ENCODE measurements at regions of chr17 and their contacts with region 1.

Region 1: DNA sequence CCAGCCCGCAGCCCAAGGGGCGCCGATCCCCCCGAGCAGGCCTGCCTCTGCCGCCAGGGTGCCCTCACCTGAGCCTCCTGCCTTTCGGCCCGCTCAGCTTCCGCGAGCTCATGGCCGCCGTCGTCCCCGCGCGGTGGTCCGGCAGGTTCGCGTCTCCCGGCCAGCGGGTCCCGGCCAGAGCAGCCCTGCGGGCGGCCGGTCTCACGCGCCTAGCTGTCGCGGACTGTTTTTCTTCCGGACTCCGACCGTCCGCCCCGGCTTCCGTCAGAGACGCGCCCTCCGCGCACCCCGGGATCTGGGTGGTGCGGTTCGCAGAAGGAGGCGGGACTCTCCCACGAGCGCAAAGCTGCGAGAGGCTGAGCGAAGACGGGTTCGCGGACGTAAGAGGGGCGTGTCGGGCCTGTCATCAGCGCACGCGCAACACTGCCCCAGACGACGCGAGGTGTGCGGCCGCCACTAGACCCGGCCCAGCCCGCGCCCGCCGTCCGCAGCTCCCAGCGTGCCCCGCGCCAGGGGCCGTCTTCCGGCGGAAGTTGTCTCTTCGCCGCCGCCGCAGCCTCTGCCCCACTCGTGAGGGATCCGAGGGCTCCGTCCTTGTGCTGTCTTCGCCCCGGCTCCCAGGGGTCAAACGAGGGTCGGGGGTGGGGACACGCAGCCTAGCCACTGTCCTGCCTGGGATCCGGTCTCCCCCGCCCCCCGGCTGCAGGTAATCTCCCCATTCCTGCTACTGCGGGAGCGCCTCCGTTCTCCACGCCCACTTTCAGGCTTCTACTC is at the start of gene INPP5K:
- DNase-seq: peak; percentile 97 to 100 (median 98)

Region 2: DNA sequence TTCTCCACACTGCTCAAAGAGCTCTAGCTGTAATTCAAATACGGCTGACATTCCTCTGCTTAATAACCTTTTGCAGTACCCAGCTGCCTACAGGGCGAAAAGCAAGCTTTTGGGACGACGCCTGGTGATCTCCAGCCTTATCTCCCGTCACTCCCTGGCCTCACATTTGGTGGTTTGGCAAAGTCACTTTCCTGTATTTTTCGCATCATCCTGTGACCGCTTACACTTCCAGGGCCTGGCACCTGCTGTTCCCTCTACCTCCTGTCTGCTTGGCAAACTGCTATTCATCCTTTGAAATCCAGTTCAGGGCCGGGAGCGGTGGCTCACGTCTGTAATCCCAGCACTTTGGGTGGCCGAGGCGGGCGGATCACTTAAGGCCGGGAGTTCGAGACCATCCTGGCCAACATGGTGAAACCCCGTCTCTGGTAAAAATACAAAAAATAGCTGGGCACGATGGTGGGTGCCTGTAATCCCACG is 249.1 kb before region 1 on chr17:
- intact Hi-C with region 1: loop called (anchors 10 kb)
- DNase-seq: no peak

Region 3: DNA sequence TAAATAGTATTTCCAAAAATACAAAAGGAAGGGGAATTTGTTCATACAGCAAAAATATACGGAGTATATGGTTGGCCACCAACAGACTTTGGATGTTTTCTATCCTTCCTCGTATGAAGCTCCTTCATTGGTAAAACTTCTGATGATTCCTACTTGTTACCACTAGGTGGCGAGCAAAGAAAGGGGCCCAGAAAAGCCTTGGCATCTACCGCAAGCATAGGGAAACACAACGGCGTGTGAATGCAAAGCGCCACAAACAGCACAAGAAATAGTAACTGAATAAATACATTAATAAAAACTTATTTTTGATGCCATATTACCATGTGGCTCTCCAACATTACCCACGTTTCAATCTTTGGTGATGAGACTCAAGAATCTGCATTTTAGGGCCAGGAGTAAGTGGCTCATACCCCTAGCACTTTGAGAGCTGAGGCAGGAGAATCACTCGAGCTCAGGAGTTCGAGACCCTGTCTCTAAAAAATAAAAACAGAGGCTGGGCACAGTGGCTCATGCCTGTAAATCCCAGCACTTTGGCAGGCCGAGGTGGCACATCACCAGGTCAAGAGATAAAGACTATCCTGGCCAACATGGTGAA is 151.0 kb before region 1 on chr17:
- intact Hi-C with region 1: loop called (anchors 1 kb)
- DNase-seq: peak in 6 of 10 donors; percentile 40 to 92 (median 49)

Region 4: DNA sequence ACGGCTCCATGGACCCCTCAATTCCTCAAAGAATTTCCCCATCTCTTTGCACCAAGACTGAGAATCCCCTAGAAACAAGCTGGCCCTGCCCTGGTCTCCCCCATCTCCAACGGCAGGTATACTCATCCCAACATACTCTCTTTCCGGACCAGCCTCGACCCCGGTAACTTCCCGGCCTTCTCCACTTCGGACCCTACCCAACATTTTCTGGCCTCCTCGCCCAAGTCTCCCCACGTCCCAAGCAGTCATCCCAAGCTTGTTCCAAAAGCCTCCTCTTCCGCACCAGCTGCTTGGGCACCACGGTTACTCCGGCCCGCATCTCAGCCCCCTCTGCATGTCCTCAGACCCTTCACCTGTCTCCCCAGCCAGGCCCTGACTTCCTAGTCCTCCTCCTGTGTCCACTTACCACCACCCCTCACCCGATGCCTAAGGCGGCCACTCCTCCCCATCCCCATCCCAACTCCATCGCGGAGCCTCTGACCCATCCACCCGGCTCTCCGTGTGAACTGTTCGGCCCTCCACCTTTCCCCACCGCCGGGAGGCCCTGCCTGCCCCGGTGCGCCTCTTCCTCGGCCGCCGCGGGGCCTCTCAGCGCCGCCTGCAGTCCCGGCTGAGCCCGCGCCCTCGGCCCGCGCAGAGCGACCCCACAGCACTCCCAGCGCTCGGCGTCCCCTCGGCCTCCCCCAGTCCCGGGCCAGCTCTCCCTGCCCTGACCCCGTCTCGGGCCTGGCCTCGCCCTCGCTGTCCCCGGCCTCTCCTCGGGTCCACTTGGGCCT is 45.0 kb after region 1 on chr17:
- intact Hi-C with region 1: loop called (anchors 2 kb)
- DNase-seq: peak in 2 of 10 donors; percentile 72 to 81

Measured in posterior cingulate gyrus (tissue), 11 donors.